MCF 10A (cell line): ENCODE measurements at regions of chr11 and their contacts with region 1.

Region 1: GRCh38 chr11:35567737-35568465 is 42.5 kb upstream of the PAMR1 start:
- DNase-seq: peak; percentile 86
- H3K4me3 Mint-ChIP-seq: no peak overlapping the region
- H3K27ac Mint-ChIP-seq: peak overlapping the region; percentile 73
- H3K4me1 Mint-ChIP-seq: peaks cover 9% of the 10 kb centered on the region
- H3K27me3 Mint-ChIP-seq: no peaks in the 10 kb centered on the region
- CTCF ChIP-seq: no peak

Region 2: DNA sequence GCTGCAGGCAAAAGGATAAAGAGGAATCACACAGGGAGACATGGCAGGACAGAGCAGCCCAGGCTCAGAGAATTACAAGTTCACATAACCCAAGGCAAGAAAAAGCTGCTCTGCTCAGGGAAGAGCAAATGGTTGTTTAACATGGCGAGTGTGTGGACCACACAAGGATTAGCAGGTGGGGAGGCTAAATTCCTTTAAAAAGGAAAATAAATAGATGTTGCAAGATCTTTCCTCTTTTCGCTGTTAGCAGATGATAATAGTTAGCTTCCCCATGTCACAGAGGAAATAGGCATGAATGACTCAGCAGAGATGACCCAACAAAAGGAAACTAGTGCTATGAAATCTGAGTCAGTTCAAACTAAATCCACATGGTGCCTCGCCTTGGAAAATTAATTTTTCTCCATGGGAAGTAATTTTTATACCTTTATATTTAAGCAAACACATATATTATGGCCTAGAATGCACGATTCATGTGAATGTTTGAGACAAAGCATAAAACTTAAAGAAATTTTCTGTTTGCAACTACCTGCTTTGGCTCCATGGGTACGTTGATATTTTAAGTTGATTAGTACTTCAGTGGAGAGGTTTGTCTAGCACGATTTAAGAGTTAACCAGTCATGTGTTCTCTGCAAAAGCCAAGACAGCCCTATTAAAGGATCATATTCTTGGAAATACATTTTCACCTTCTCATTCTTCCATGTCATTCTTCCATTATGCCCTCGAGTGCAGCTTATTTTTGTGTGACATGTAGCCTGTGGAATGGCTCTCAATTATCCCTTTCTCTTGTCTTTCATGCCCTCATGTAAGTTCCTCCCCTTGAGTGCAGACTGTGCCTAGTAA is 11.9 kb after region 1 on chr11:
- CTCF ChIA-PET with region 1: no interaction called
- POLR2A ChIA-PET with region 1: interaction called, 10 read pairs
- intact Hi-C with region 1: no loop called
- DNase-seq: peak; percentile 87
- H3K4me3 Mint-ChIP-seq: peak overlapping the region; percentile 18
- H3K27ac Mint-ChIP-seq: peak overlapping the region; percentile 64
- H3K4me1 Mint-ChIP-seq: peaks cover 33% of the 10 kb centered on the region
- H3K27me3 Mint-ChIP-seq: no peaks in the 10 kb centered on the region
- CTCF ChIP-seq: no peak

Region 3: DNA sequence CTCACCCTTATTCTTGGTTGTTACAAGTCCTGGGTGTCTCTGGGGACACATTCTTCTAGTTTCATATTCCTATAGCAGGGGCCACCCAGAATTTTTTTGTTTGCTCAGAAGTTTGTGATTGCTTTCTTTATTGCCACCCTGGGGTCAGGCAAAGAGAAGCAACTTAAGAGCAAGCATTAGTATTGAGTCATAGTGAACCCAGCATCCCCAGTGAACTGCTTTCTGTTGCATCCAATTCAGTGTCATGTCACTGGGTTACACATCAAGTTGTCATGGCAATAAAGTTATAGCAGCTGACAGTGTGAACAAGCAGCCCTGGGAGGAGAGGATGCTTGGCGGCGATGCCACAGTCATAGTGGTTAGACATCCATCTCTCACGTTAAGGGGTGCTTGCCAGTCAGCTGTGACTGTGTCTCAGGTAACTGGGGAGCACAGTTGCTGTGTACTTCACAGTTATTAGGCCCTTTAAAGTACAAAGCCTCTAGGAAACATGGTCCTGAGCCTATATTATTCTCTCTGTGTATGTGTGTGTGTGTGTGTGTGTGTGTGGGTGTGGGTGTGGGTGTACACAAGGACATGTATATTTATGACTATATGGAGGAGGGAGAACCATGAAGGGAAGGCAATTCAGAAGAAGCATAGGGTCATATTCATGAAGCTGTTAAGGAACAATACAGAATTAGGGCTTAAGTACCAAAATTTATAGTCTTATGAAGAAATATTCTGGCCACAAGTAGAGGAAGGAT is 147.2 kb after region 1 on chr11:
- CTCF ChIA-PET with region 1: no interaction called
- POLR2A ChIA-PET with region 1: no interaction called
- intact Hi-C with region 1: no loop called
- DNase-seq: no peak
- H3K4me3 Mint-ChIP-seq: no peak overlapping the region
- H3K27ac Mint-ChIP-seq: no peak overlapping the region
- H3K4me1 Mint-ChIP-seq: peaks cover 17% of the 10 kb centered on the region
- H3K27me3 Mint-ChIP-seq: no peaks in the 10 kb centered on the region
- CTCF ChIP-seq: no peak